ENCODE measurements at regions of chr9 and their contacts with region 1.

Region 1: GRCh38 chr9:29285818-29286217 is 1712.5 kb upstream of the C9orf72 start:
- DNase-seq: no peak
- ATAC-seq: no peak
- H3K4me3 ChIP-seq: no peak overlapping the region
- H3K27ac ChIP-seq: no peak overlapping the region
- H3K4me1 ChIP-seq: no peaks in the 10 kb centered on the region
- H3K27me3 ChIP-seq: no peaks in the 10 kb centered on the region
- CTCF ChIP-seq: no peak

Region 2: GRCh38 chr9:29230931-29231330 is 54.9 kb before region 1 on chr9:
- intact Hi-C with region 1: loop called in 1 of 10 experiments (anchors 10 kb)
- DNase-seq: no peak
- ATAC-seq: no peak
- H3K4me3 ChIP-seq: no peak overlapping the region
- H3K27ac ChIP-seq: no peak overlapping the region
- H3K4me1 ChIP-seq: no peaks in the 10 kb centered on the region
- H3K27me3 ChIP-seq: no peaks in the 10 kb centered on the region
- CTCF ChIP-seq: no peak

Region 3: GRCh38 chr9:29613773-29614172 is 328.0 kb after region 1 on chr9:
- intact Hi-C with region 1: no loop called
- DNase-seq: no peak
- ATAC-seq: no peak
- H3K4me3 ChIP-seq: no peak overlapping the region
- H3K27ac ChIP-seq: no peak overlapping the region
- H3K4me1 ChIP-seq: no peaks in the 10 kb centered on the region
- H3K27me3 ChIP-seq: no peaks in the 10 kb centered on the region
- CTCF ChIP-seq: no peak